Left colon (tissue), 2 donors: ENCODE measurements at regions of chr17 and their contacts with region 1.

Region 1: DNA sequence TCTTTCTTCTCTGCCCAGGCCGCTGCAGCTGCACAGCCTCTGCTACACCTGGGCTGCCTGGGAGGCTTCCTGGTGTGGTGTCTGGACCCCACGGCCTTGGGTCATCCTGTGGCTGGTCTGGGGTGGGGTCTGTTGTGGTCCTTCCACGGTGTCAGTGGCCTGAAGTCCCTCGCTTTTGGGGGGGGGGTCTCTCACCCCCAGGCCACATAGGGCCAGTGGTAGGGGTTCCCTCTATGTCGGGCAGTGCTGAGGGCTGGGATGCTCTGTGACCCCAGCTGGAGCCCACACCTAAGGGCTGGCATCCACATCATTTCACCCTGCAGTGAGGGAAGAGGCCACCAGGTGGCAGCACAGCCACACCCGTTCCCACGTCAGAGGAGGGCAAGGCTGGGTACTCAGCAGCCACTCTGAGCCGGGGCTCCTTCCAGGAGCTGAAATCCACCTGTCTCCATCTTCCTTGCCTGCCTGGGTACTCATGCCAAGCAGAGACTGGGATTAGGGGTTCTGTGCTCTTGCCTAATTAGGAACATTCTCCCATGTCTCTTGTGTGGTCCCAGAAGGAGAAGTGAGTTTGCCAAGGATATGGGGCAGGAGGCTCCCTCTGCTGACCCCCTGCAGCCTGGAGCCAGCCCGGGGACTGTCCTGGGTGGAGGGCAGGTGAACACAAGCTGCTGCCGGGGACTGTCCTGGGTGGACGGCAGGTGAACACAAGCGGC is 13.0 kb downstream of the ENGASE start:
- DNase-seq: peak in 1 of 2 donors; percentile 82
- ATAC-seq: peak; percentile 58

Region 2: DNA sequence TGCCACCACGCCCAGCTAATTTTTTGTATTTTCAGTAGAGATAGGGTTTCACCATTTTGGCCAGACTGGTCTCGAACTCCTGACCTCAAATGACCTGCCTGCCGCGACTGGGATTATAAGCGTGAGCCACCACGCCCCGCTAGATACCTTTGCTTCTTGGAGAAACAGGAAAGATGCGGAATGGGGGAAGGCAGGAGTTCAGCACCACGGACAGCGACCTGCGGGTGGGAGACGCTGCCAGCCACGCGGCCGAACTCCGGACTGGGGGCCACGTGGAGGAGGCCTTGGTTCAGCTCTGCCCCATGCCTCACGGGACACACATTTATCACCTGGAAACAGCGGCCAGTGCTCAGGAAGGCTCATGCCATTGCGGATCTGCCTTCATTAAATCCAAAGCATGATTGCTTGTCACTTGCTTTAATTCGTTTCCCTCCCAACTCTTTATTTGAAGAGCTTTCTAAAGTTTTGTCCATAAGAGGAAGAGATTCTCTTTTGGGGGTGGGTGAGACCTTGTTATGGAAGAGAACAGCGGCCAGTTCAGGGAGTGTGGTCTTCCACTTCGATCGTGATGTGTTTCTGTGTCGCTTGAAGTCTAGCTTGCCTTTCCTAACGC is 207.0 kb after region 1 on chr17:
- intact Hi-C with region 1: no loop called
- DNase-seq: peak; percentile 33 to 56
- ATAC-seq: peak; percentile 43

Region 3: GRCh38 chr17:79393358-79394202 is 306.0 kb after region 1 on chr17:
- intact Hi-C with region 1: loop called (anchors 5 to 10 kb)
- DNase-seq: peak; percentile 43 to 85
- ATAC-seq: peak; percentile 87